ENCODE measurements at regions of chr5 and their contacts with region 1.

Region 1: GRCh38 chr5:95949810-95950209 is 11.8 kb downstream of the ELL2 start:
- DNase-seq: no peak
- H3K4me3 ChIP-seq: no peak overlapping the region
- H3K27ac ChIP-seq: no peak overlapping the region
- H3K4me1 ChIP-seq: peaks cover 18 to 68% (median 47%) of the 10 kb centered on the region in 4 donors
- H3K27me3 ChIP-seq: no peaks in the 10 kb centered on the region
- CTCF ChIP-seq: no peak
- EP300 ChIP-seq: no peak
- POLR2A ChIP-seq: no peak

Region 2: GRCh38 chr5:95907067-95907705 is 42.6 kb before region 1 on chr5:
- intact Hi-C with region 1: loop called (anchors 5 kb)
- DNase-seq: no peak
- H3K4me3 ChIP-seq: no peak overlapping the region
- H3K27ac ChIP-seq: no peak overlapping the region
- H3K4me1 ChIP-seq: peaks cover 7 to 37% (median 13%) of the 10 kb centered on the region in 4 donors
- H3K27me3 ChIP-seq: no peaks in the 10 kb centered on the region
- CTCF ChIP-seq: no peak
- EP300 ChIP-seq: no peak
- POLR2A ChIP-seq: no peak